ENCODE measurements at regions of chr12 and their contacts with region 1.

Region 1: GRCh38 chr12:48165094-48165981 is 8.0 kb upstream of the ASB8 start:
- DNase-seq: peak in 1 of 5 donors; percentile 26
- ATAC-seq: peak in 2 of 4 donors; percentile 44 to 64
- H3K4me3 ChIP-seq: no peak overlapping the region
- H3K27ac ChIP-seq: no peak overlapping the region
- H3K4me1 ChIP-seq: peaks cover 0 to 4% (median 0%) of the 10 kb centered on the region in 12 donors
- H3K27me3 ChIP-seq: peaks cover 0 to 9% (median 0%) of the 10 kb centered on the region in 9 donors
- CTCF ChIP-seq: peak; percentile 78 to 97 (median 92)
- POLR2A ChIP-seq: no peak

Region 2: DNA sequence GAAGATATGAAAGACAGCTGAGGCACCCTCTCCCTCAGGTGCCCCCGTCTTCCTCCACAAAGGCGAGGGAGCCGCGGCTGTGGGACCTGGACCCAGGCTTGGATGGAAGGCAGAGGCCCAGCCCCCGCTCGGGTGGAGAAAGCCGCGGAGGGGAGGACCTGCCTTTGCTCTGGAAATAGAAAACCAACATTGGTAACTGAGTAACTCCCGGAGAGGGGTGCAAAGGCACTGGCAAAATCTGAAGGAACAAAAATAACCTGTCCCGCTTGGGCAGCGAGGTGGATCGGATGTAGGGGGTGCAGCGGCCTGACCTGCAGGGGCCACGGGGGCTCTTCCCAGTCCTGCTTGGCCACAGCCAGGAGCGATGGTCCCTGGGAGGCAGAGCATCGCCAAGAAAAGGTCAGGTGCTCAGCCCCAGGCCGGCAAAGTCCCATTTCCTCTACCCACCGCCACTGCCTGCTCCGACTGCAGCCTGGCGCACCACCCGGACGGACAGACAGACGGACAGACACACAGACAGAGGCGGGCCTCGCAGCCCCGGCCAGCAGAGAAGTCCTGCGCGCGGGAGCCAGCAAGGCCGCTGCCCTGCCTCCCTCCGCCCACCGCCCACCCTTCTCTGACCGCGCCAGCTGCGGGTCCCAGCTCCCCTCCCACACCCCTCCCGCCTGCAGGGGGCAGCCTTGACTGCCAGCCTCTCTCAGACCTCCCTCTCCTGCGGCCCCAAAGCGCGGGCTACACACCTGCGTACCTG is 223.3 kb before region 1 on chr12:
- intact Hi-C with region 1: no loop called
- DNase-seq: no peak
- ATAC-seq: no peak
- H3K4me3 ChIP-seq: no peak overlapping the region
- H3K27ac ChIP-seq: no peak overlapping the region
- H3K4me1 ChIP-seq: peaks cover 0 to 12% (median 0%) of the 10 kb centered on the region in 12 donors
- H3K27me3 ChIP-seq: peaks cover 0 to 13% (median 6%) of the 10 kb centered on the region in 9 donors
- CTCF ChIP-seq: peak in 7 of 12 donors; percentile 12 to 25 (median 18)
- POLR2A ChIP-seq: no peak

Region 3: GRCh38 chr12:48084066-48084465 is 81.3 kb before region 1 on chr12:
- intact Hi-C with region 1: loop called (anchors 1 to 5 kb)
- DNase-seq: no peak
- ATAC-seq: no peak
- H3K4me3 ChIP-seq: no peak overlapping the region
- H3K27ac ChIP-seq: no peak overlapping the region
- H3K4me1 ChIP-seq: no peaks in the 10 kb centered on the region
- H3K27me3 ChIP-seq: no peaks in the 10 kb centered on the region
- CTCF ChIP-seq: peak in 10 of 12 donors; percentile 16 to 54 (median 42)
- POLR2A ChIP-seq: no peak

Region 4: DNA sequence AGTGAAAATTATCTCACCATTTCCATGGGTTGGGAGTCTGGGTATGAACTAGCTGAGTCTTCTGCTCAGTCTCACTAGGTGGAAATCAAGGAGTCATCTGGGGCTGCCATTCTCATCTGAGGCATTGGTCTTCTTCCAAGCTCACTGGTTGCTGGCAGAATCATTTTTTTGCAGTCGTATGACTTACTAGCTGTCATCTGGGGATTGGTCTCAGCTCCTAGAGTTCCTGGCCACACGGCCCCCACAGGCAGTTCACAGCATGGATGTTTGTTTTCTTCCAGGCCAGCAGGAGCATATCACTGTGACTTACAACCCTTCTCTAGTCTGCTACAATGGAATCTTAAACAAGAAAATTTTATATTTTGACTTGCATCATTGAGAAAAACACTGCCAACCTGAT is 56.3 kb after region 1 on chr12:
- intact Hi-C with region 1: no loop called
- DNase-seq: no peak
- ATAC-seq: no peak
- H3K4me3 ChIP-seq: no peak overlapping the region
- H3K27ac ChIP-seq: no peak overlapping the region
- H3K4me1 ChIP-seq: peaks cover 0 to 4% (median 0%) of the 10 kb centered on the region in 12 donors
- H3K27me3 ChIP-seq: peaks cover 0 to 6% (median 0%) of the 10 kb centered on the region in 9 donors
- CTCF ChIP-seq: no peak
- POLR2A ChIP-seq: no peak

Measured in heart left ventricle (tissue), 16 donors.